ENCODE measurements at regions of chr1 and their contacts with region 1.

Region 1: GRCh38 chr1:2194898-2195673 is 514 bp upstream of the FAAP20 start:
- DNase-seq: peak; percentile 85 to 94 (median 92)
- H3K4me3 ChIP-seq: peak overlapping the region; percentile 80
- H3K4me3 Mint-ChIP-seq: peak overlapping the region; percentile 80 to 95 (median 87)
- H3K27ac ChIP-seq: peak overlapping the region; percentile 78
- H3K27ac Mint-ChIP-seq: peak overlapping the region; percentile 87 to 98 (median 92)
- H3K4me1 ChIP-seq: peaks cover 35% of the 10 kb centered on the region
- H3K4me1 Mint-ChIP-seq: peaks cover 20 to 38% (median 21%) of the 10 kb centered on the region in 3 donors
- H3K27me3 ChIP-seq: no peaks in the 10 kb centered on the region
- H3K27me3 Mint-ChIP-seq: no peaks in the 10 kb centered on the region

Region 2: DNA sequence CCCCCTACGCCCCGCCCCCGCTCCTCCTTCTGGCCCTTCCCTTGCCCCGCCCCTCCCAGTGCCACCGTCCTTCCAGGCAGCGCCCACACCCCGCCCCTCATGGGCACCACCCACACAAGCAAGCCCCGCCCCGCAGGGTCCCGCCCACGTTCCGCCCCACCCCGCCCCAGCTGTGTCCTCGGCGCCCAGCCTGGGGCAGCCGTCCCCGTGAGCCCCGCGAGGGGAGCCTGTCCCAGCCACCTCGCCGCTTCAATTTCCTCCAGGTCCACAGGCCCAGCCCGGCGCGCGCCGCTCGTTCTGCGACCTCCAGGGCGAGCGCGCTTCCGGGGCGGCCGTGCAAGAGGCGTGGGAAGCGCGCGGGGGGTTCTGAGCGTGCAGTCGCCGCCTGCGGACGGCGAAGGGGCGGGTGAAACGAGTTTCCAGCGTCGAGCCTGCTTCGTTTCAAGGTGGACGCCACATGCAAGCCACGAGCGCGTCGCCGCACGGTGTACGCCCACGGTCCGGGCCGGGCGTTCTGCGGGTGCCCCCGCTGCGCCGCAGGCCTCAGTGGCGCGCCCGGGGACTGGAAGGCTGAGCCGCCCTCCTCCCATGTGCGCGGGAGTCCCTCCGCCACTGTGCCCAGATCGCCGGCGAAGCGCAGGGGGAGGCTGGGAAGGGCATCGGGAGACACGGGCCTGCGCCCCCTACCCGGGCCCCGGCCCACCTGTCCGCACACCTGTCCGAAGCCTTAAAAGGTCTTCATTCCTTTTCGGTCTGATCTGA is 10.3 kb after region 1 on chr1:
- CTCF ChIA-PET with region 1: interaction called, 13 read pairs
- POLR2A ChIA-PET with region 1: interaction called, 3 read pairs
- DNase-seq: peak; percentile 89 to 96 (median 91)
- H3K4me3 ChIP-seq: peak overlapping the region; percentile 58
- H3K4me3 Mint-ChIP-seq: peak overlapping the region; percentile 46 to 88 (median 66)
- H3K27ac ChIP-seq: peak overlapping the region; percentile 38
- H3K27ac Mint-ChIP-seq: peak overlapping the region in 4 of 8 donors; percentile 3 to 68 (median 40)
- H3K4me1 ChIP-seq: peaks cover 9% of the 10 kb centered on the region
- H3K4me1 Mint-ChIP-seq: peaks cover 0 to 4% (median 2%) of the 10 kb centered on the region in 3 donors
- H3K27me3 ChIP-seq: no peaks in the 10 kb centered on the region
- H3K27me3 Mint-ChIP-seq: no peaks in the 10 kb centered on the region

Region 3: GRCh38 chr1:2233997-2234761 is 39.1 kb after region 1 on chr1:
- CTCF ChIA-PET with region 1: interaction called, 23 read pairs
- POLR2A ChIA-PET with region 1: interaction called, 8 read pairs
- DNase-seq: peak; percentile 77 to 94 (median 82)
- H3K4me3 ChIP-seq: peak overlapping the region; percentile 91
- H3K4me3 Mint-ChIP-seq: peak overlapping the region; percentile 84 to 99 (median 94)
- H3K27ac ChIP-seq: peak overlapping the region; percentile 64
- H3K27ac Mint-ChIP-seq: peak overlapping the region; percentile 97 to 100 (median 98)
- H3K4me1 ChIP-seq: peaks cover 92% of the 10 kb centered on the region
- H3K4me1 Mint-ChIP-seq: peaks cover 75 to 86% (median 76%) of the 10 kb centered on the region in 3 donors
- H3K27me3 ChIP-seq: no peaks in the 10 kb centered on the region
- H3K27me3 Mint-ChIP-seq: peaks cover 0 to 11% of the 10 kb centered on the region in 2 donors

Region 4: DNA sequence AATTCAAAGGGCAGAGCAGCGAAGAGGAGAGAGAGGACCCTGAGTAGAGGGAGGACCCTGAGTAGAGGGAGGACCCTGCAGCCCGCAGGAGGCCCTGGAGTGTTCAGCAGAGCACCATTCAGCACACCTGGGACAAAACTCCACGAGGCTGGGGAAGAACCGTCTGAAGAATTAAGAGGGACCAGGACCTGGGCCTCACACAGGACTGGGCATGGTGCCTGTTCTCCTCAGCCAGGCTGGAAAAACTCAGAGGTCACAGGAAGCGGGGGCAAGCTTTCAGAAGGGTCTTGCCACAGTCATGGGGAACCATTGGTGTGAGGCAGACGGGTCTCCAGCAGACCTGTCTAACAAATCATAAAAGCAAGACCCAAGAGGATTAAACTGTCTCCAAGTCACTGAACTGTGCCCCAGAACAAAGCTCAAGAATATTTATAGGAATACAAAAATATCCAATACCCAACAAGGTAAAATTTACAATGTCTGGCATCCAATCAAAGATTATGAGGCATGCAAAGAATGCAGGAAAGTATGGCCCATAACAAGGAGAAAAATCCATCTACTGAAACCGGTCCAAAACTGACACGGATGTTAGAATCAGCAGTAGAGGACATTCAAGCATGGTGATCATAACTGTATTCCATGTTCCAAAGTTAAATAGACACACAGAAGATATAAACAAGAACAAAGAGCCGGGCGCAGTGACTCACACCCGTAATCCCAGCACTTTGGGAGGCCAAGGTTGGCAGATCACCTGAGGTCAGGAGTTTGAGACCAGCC is 165.7 kb after region 1 on chr1:
- CTCF ChIA-PET with region 1: no interaction called
- POLR2A ChIA-PET with region 1: no interaction called
- DNase-seq: no peak
- H3K4me3 ChIP-seq: no peak overlapping the region
- H3K4me3 Mint-ChIP-seq: no peak overlapping the region
- H3K27ac ChIP-seq: no peak overlapping the region
- H3K27ac Mint-ChIP-seq: no peak overlapping the region
- H3K4me1 ChIP-seq: no peaks in the 10 kb centered on the region
- H3K4me1 Mint-ChIP-seq: no peaks in the 10 kb centered on the region
- H3K27me3 ChIP-seq: no peaks in the 10 kb centered on the region
- H3K27me3 Mint-ChIP-seq: no peaks in the 10 kb centered on the region

Region 5: GRCh38 chr1:2381741-2382620 is 186.9 kb after region 1 on chr1:
- CTCF ChIA-PET with region 1: interaction called, 114 read pairs
- POLR2A ChIA-PET with region 1: interaction called, 11 read pairs
- DNase-seq: peak; percentile 61 to 83 (median 70)
- H3K4me3 ChIP-seq: no peak overlapping the region
- H3K4me3 Mint-ChIP-seq: no peak overlapping the region
- H3K27ac ChIP-seq: no peak overlapping the region
- H3K27ac Mint-ChIP-seq: no peak overlapping the region
- H3K4me1 ChIP-seq: peaks cover 11% of the 10 kb centered on the region
- H3K4me1 Mint-ChIP-seq: peaks cover 0 to 3% (median 3%) of the 10 kb centered on the region in 3 donors
- H3K27me3 ChIP-seq: no peaks in the 10 kb centered on the region
- H3K27me3 Mint-ChIP-seq: no peaks in the 10 kb centered on the region

Region 6: DNA sequence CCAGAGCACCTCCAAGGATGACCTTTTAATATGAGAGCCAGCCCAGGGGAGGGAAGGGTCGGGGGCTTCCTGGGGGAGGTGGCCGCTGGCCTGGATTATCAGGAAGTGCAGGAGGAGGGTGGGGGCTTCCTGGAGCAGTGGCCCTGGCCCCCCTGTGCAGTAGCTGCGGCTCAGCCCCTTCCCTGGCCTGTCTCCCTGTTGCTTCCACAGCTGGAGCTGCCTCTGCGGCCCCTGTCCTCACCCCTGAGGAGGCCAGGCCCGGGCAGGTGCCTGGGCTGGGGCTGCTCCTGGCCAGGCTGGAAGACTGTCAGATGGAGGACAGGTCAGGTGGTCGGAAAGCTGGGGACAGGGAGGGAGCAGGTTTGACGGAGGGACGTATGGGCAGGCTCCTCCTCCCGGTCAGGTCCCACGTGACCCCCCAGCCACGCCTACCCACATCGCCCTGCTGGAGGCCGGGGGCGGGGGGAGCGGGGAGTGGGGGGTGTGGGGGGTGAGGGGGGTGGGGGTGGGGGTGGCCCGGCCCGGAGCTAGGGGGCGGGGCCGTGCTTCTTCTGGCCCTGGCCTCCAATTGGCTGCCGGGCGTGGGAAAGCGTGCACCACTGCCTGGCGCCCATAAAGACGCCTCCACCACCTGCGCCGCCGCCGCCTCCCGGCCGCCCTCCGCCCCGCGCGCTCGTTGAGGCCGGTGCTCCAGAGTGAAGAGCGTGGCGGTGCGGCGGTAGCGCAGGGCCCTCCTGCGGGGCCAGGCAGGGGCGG is 350.9 kb after region 1 on chr1:
- CTCF ChIA-PET with region 1: interaction called, 10 read pairs
- POLR2A ChIA-PET with region 1: interaction called, 8 read pairs
- DNase-seq: peak; percentile 86 to 92 (median 88)
- H3K4me3 ChIP-seq: peak overlapping the region; percentile 96
- H3K4me3 Mint-ChIP-seq: peak overlapping the region; percentile 91 to 98 (median 94)
- H3K27ac ChIP-seq: peak overlapping the region; percentile 92
- H3K27ac Mint-ChIP-seq: peak overlapping the region; percentile 50 to 100 (median 96)
- H3K4me1 ChIP-seq: peaks cover 52% of the 10 kb centered on the region
- H3K4me1 Mint-ChIP-seq: peaks cover 13 to 53% (median 19%) of the 10 kb centered on the region in 3 donors
- H3K27me3 ChIP-seq: no peaks in the 10 kb centered on the region
- H3K27me3 Mint-ChIP-seq: no peaks in the 10 kb centered on the region

Measured in CD8-positive, alpha-beta memory T cell (primary cell).